ENCODE measurements at regions of chr7 and their contacts with region 1.

Region 1: GRCh38 chr7:151351027-151351426 is 9.4 kb downstream of the NUB1 start:
- DNase-seq: no peak
- ATAC-seq: no peak
- H3K4me3 ChIP-seq: no peak overlapping the region
- H3K27ac ChIP-seq: no peak overlapping the region
- H3K4me1 ChIP-seq: peaks cover 4 to 14% of the 10 kb centered on the region in 2 donors
- H3K27me3 ChIP-seq: no peaks in the 10 kb centered on the region
- CTCF ChIP-seq: no peak
- POLR2A ChIP-seq: no peak

Region 2: DNA sequence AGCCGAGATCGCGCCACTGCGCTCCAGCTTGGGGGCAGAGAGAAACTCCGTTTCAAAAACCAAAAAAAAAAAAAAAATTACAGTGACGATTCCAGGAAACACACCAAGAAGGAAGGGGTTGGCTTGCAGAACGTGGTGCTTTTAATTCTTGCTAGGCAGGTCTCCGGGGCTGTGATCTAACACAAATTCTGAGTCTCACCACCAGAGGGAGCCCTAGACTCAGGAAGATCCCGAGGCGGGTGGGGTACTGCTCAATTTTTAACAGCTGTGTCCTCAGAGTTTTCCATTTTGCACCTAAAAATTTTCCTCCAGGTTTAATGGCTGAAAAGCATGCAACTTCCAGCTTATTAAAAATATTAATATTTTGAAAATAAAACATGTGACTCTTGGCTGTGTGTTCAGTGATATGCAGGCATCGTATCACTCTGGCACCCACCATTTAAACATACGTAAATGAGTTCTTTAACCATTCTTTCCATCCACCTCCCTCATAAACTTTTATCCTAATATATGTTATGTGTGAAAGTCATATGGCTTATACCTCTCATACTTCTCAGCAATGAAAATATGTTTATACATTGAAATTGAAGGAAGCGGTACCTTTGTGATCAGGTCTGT is 35.9 kb before region 1 on chr7:
- in situ Hi-C with region 1: loop called in 3 of 4 experiments (anchors 5 kb)
- intact Hi-C with region 1: loop called (anchors 1 kb)
- DNase-seq: peak; percentile 31 to 59
- ATAC-seq: peak; percentile 65 to 72
- H3K4me3 ChIP-seq: no peak overlapping the region
- H3K27ac ChIP-seq: no peak overlapping the region
- H3K4me1 ChIP-seq: peaks cover 6% of the 10 kb centered on the region in 2 donors
- H3K27me3 ChIP-seq: no peaks in the 10 kb centered on the region
- CTCF ChIP-seq: peak; percentile 60 to 83 (median 80)
- POLR2A ChIP-seq: no peak

Region 3: GRCh38 chr7:151320263-151320845 is 30.7 kb before region 1 on chr7:
- in situ Hi-C with region 1: loop called in 3 of 4 experiments (anchors 5 kb)
- intact Hi-C with region 1: loop called (anchors 1 kb)
- DNase-seq: no peak
- ATAC-seq: no peak
- H3K4me3 ChIP-seq: no peak overlapping the region
- H3K27ac ChIP-seq: no peak overlapping the region
- H3K4me1 ChIP-seq: no peaks in the 10 kb centered on the region
- H3K27me3 ChIP-seq: no peaks in the 10 kb centered on the region
- CTCF ChIP-seq: no peak
- POLR2A ChIP-seq: no peak